ENCODE measurements at regions of chr1 and their contacts with region 1.

Region 1: DNA sequence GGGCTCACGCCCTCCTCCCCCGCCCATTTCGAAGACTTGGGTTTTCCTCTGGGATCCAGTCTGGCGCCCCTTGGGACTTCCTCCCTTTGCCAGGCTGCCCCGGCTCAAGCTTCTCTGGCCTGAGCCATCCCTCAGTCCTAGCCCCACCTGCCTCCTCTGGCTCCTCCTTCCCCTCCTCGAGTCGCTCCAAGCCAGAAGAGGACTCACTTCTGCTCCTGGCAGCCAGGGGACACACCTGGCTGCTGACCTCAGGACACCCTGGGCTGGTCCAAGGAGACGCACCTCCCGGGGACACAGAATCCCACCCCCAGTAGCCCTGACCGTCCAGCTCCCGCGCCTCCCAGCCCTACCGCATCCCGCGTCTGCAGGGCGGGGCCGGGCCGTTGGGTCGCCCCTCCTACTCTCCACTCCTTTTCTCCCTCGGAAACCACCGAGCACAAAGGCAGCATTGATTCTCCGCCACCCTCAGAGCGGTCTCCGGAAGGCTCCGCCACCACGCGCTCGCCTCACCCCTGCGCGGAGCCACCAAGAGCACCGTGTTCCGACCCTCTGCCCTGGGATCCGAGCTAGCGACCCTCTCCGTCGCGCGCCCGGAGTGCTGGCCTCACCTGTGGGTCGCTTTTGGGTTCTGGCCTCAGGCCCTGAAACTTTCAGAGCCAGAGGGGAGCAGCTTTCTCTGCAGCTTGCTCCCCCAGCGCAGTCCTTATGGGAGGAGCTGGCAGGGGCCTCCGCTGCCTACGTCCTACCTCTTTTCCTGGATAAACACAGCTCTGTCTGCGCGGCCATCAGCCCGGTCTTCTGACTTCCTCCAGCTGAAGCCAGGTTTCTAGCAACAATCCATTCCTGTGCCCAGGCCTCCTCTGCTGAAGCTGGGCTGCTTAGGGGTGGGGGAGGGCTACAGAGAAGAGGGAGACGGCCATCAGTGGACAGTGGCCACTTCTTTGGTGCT is at the start of gene C2CD4D:
- DNase-seq: peak; percentile 75 to 87 (median 79)
- H3K4me3 ChIP-seq: peak within 1 kb of the TSS; percentile 52 to 83
- H3K4me3 Mint-ChIP-seq: peak within 1 kb of the TSS; percentile 84 to 93 (median 88)
- H3K27ac ChIP-seq: peak within 1 kb of the TSS; percentile 75
- H3K27ac Mint-ChIP-seq: peak within 1 kb of the TSS; percentile 82 to 98 (median 94)
- H3K4me1 ChIP-seq: peaks cover 54% of the 10 kb centered on the region
- H3K4me1 Mint-ChIP-seq: peaks cover 27 to 66% (median 52%) of the 10 kb centered on the region in 4 donors
- H3K27me3 ChIP-seq: no peaks in the 10 kb centered on the region
- H3K27me3 Mint-ChIP-seq: no peaks in the 10 kb centered on the region
- total RNA-seq, gene C2CD4D: 1.0 to 1.7 TPM

Region 2: GRCh38 chr1:151459331-151460046 is 380.2 kb before region 1 on chr1 and contains the start of gene POGZ:
- CTCF ChIA-PET with region 1: no interaction called
- POLR2A ChIA-PET with region 1: no interaction called
- intact Hi-C with region 1: loop called (anchors 5 kb)
- DNase-seq: peak; percentile 91 to 93 (median 92)
- H3K4me3 ChIP-seq: peak within 1 kb of the TSS; percentile 83 to 98
- H3K4me3 Mint-ChIP-seq: peak within 1 kb of the TSS; percentile 87 to 96 (median 92)
- H3K27ac ChIP-seq: peak within 1 kb of the TSS; percentile 75
- H3K27ac Mint-ChIP-seq: peak within 1 kb of the TSS; percentile 95 to 99 (median 96)
- H3K4me1 ChIP-seq: peaks cover 31% of the 10 kb centered on the region
- H3K4me1 Mint-ChIP-seq: peaks cover 11 to 35% (median 23%) of the 10 kb centered on the region in 4 donors
- H3K27me3 ChIP-seq: no peaks in the 10 kb centered on the region
- H3K27me3 Mint-ChIP-seq: peaks cover 17% of the 10 kb centered on the region in 2 donors
- total RNA-seq, gene POGZ: 125 to 130 TPM

Region 3: DNA sequence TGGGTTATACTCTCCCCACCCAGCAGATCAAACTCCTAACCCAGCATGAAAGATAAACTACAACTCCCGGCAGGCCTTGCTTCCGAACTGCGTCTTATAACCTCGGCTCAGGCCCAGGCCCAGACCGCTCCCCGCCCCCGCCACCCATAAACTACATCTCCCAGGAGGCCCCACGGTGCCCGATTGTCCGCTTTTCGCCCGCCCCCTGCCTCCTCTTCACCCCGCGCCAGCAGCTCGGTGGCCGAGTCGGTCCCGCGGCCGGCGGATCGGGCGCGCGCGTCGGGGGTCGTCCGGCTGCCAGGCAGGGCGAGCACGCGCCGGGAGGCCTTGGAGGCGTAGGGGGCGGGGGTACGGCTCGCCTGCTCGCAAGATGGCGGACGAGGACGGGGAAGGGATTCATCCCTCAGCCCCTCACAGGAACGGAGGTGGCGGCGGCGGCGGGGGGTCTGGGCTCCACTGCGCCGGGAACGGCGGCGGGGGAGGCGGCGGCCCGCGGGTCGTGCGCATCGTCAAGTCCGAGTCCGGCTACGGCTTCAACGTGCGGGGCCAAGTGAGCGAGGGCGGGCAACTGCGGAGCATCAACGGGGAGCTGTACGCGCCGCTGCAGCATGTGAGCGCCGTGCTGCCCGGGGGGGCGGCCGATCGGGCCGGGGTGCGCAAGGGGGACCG is 227.8 kb before region 1 on chr1 and contains the start of gene SNX27:
- CTCF ChIA-PET with region 1: interaction called, 5 read pairs
- POLR2A ChIA-PET with region 1: interaction called, 3 read pairs
- intact Hi-C with region 1: loop called (anchors 5 kb)
- DNase-seq: peak; percentile 87 to 96 (median 89)
- H3K4me3 ChIP-seq: peak within 1 kb of the TSS; percentile 73 to 77
- H3K4me3 Mint-ChIP-seq: peak within 1 kb of the TSS; percentile 98 to 100 (median 99)
- H3K27ac ChIP-seq: peak within 1 kb of the TSS; percentile 87
- H3K27ac Mint-ChIP-seq: peak within 1 kb of the TSS; percentile 89 to 99 (median 97)
- H3K4me1 ChIP-seq: peaks cover 32% of the 10 kb centered on the region
- H3K4me1 Mint-ChIP-seq: peaks cover 31 to 46% (median 39%) of the 10 kb centered on the region in 4 donors
- H3K27me3 ChIP-seq: no peaks in the 10 kb centered on the region
- H3K27me3 Mint-ChIP-seq: peaks cover 0 to 1% of the 10 kb centered on the region in 2 donors
- total RNA-seq, gene SNX27: 40.0 to 44.3 TPM

Region 4: GRCh38 chr1:151762941-151763921 is 76.5 kb before region 1 on chr1 and contains the start of gene MRPL9:
- CTCF ChIA-PET with region 1: interaction called, 32 read pairs
- POLR2A ChIA-PET with region 1: interaction called, 15 read pairs
- intact Hi-C with region 1: loop called (anchors 1 kb)
- DNase-seq: peak; percentile 82 to 85 (median 83)
- H3K4me3 ChIP-seq: peak within 1 kb of the TSS; percentile 34 to 66
- H3K4me3 Mint-ChIP-seq: peak within 1 kb of the TSS; percentile 86 to 97 (median 92)
- H3K27ac ChIP-seq: peak within 1 kb of the TSS; percentile 72
- H3K27ac Mint-ChIP-seq: peak within 1 kb of the TSS; percentile 90 to 99 (median 96)
- H3K4me1 ChIP-seq: peaks cover 16% of the 10 kb centered on the region
- H3K4me1 Mint-ChIP-seq: peaks cover 12 to 30% (median 21%) of the 10 kb centered on the region in 4 donors
- H3K27me3 ChIP-seq: no peaks in the 10 kb centered on the region
- H3K27me3 Mint-ChIP-seq: no peaks in the 10 kb centered on the region
- total RNA-seq, gene MRPL9: 75.5 to 82.8 TPM

Region 5: DNA sequence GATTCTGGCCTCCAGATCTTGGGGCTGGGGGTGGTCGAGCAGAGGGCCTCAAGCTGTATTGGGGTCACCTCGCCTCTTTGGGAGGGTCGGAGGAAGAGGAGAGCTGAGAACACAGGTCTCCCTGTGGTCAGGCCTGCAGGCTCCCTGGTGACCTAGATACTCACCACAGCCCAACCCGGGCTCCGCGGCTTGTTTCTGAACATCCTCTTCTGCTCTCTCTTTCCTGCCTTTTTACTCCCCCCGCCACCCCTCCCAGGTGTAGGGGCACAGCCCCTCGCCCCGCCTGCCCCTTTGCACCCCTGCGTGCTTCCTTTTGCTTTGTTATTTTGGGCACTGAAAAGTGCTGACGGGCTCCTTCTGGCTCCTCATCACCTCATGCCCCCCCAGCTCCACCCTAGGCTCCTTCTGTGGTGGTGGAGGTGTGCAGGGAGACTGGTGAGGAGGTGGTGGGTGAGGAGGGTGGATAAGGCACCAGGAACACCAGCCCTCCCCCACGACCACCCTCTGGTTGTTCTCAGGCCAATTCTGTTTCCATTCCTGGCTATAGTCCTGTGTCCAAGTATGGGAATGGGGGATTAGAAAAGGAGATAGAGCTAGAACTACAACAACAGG is 23.9 kb before region 1 on chr1:
- CTCF ChIA-PET with region 1: interaction called, 37 read pairs
- POLR2A ChIA-PET with region 1: interaction called, 233 read pairs
- intact Hi-C with region 1: no loop called
- DNase-seq: peak; percentile 72 to 81 (median 78)
- H3K4me3 ChIP-seq: peak overlapping the region; percentile 25 to 38
- H3K4me3 Mint-ChIP-seq: peak overlapping the region; percentile 75 to 85 (median 79)
- H3K27ac ChIP-seq: peak overlapping the region; percentile 49
- H3K27ac Mint-ChIP-seq: peak overlapping the region; percentile 84 to 95 (median 92)
- H3K4me1 ChIP-seq: peaks cover 92% of the 10 kb centered on the region
- H3K4me1 Mint-ChIP-seq: peaks cover 64 to 96% (median 80%) of the 10 kb centered on the region in 4 donors
- H3K27me3 ChIP-seq: no peaks in the 10 kb centered on the region
- H3K27me3 Mint-ChIP-seq: no peaks in the 10 kb centered on the region

Region 6: DNA sequence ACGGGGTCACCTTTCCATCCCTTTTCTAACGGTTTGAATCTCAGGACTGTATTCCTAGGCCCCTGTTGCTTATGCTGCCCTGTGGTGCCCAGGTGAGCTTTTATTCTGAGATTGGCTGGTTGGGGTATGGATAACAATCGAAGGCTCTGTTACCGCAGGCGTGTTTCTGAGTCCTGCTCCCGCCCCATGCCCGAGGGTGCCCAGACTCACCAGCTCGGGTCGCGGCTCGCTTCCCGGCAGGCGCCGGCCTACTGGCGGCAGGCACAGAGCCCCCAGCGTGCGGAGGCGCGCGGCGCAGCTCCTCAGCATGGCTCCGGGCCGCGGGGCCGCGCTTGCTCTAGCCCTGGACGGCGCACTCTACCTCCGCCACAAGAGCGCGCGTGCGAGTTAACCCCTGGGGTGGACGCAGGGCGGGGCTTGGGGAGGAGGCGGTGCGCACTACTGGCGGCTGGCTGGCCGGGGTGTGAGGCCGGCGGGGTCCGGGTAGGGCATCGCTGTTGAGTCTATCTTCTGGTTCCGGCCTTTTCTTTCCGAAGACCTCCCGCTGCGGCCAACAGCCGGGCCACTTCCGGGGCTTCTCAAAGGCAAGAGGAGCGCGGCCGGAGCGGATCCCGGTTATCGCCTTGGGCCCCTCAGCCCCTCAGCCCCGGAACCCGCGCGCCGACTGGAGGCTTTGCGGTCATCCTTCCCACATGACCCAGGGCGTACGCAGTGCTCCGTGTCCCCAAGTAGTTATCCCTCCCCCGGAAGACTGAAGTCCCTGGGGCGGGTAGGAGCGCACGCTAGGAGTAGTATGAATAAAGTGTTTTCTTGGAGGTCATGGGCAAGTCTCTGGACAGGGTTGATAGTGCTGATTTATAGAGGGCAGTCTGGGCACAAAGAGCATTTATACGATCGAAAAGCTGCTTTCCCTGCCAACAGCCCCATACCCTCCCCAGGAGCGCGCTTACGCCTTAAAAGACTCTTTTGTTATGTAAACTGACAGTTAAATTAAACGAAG is 69.7 kb after region 1 on chr1 and contains the start of gene THEM4:
- CTCF ChIA-PET with region 1: no interaction called
- POLR2A ChIA-PET with region 1: interaction called, 19 read pairs
- intact Hi-C with region 1: loop called (anchors 5 kb)
- DNase-seq: peak; percentile 81 to 90 (median 83)
- H3K4me3 ChIP-seq: peak within 1 kb of the TSS; percentile 76 to 79
- H3K4me3 Mint-ChIP-seq: peak within 1 kb of the TSS; percentile 83 to 91 (median 86)
- H3K27ac ChIP-seq: peak within 1 kb of the TSS; percentile 61
- H3K27ac Mint-ChIP-seq: peak within 1 kb of the TSS; percentile 73 to 94 (median 89)
- H3K4me1 ChIP-seq: peaks cover 53% of the 10 kb centered on the region
- H3K4me1 Mint-ChIP-seq: peaks cover 22 to 48% (median 39%) of the 10 kb centered on the region in 4 donors
- H3K27me3 ChIP-seq: no peaks in the 10 kb centered on the region
- H3K27me3 Mint-ChIP-seq: no peaks in the 10 kb centered on the region
- total RNA-seq, gene THEM4: 105 to 106 TPM

Region 7: DNA sequence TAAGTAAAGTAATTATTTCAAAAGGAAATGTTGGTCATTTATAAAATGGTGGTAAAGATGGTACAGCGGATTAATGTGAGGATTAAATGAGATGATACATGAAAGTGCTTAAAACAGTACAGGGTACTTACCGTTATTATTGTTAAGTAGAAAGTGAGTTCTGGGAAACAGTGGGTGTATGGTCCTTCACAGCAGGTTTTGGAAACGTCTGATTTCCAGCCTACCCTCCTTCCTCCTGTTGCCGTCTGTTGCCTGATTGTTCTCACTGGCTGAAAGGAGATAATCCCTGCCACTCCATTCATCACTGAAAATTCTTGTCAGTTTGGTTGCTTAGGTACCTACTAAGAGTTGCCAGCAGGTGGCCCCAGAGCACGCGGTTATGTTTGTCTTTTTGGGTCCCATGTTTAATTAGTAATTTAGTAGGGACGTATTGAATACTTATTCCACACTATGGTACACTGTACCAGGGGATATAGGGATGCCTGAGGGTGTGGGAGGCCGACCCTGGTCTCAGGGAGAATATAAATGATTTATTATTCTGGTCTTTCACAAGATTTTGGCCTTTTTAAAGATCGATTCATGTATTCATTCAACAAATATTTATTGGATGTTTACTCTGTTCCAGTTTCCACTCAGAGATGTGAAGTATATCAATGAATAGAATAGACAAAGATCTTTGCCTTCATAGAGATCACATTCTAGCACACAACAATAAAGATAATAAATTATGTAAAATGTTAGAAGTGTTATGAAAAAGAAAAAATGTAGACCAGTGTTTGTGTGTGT is 350.1 kb after region 1 on chr1:
- CTCF ChIA-PET with region 1: no interaction called
- POLR2A ChIA-PET with region 1: no interaction called
- intact Hi-C with region 1: no loop called
- DNase-seq: peak; percentile 67 to 73 (median 68)
- H3K4me3 ChIP-seq: no peak overlapping the region
- H3K4me3 Mint-ChIP-seq: peak overlapping the region; percentile 65 to 88 (median 80)
- H3K27ac ChIP-seq: no peak overlapping the region
- H3K27ac Mint-ChIP-seq: peak overlapping the region in 4 of 7 donors; percentile 43 to 67 (median 46)
- H3K4me1 ChIP-seq: no peaks in the 10 kb centered on the region
- H3K4me1 Mint-ChIP-seq: peaks cover 6 to 7% (median 6%) of the 10 kb centered on the region in 4 donors
- H3K27me3 ChIP-seq: no peaks in the 10 kb centered on the region
- H3K27me3 Mint-ChIP-seq: peaks cover 2 to 6% of the 10 kb centered on the region in 2 donors